Gastrocnemius medialis (tissue), 4 donors: ENCODE measurements at regions of chr9 and their contacts with region 1.

Region 1: DNA sequence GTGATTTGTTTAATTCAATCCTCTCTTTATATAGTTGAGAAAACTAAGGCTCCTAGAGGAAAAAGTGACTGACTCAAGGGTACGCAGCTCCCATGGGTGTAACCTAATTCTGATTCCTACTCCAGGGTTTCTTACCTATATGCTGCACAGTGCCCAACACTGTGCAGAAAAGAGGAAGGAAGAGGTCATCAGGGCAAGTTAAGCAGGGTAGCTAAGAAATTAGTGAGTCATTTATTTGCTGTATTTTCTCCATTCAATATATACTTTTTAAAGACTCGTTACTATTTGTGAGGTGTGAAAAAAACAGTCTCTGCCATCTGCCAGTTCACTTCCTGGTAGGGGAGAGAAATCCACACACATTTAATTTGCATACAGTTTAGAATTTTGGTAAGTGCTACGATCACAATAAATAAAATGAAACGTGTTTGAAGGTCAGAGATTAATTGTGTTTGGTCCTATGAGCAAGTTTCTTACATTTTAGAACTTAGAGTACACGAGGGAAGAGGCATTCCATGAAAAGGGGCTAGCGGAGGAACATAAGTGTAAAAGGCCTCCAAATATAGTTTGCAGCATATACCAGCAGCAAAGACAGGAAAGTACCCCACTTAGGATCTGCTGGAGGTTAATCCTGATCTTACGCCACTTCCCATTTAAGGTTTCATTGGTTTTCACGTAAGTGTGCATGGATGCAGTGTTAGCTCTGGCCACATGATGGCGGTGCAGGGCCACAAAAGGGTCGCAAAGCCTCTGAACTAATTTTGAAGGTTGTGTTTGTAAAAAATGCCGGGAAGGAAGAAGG is 59.9 kb upstream of the TLR4 start:
- DNase-seq: peak; percentile 14 to 50
- ATAC-seq: peak; percentile 65 to 66
- H3K4me3 ChIP-seq: peak overlapping the region; percentile 30 to 57 (median 38)
- H3K27ac ChIP-seq: peak overlapping the region in 1 of 4 donors; percentile 24
- H3K4me1 ChIP-seq: peaks cover 0 to 3% of the 10 kb centered on the region in 2 donors
- H3K27me3 ChIP-seq: peaks cover 0 to 17% (median 8%) of the 10 kb centered on the region in 3 donors
- CTCF ChIP-seq: peak; percentile 77 to 91 (median 86)
- POLR2A ChIP-seq: no peak

Region 2: DNA sequence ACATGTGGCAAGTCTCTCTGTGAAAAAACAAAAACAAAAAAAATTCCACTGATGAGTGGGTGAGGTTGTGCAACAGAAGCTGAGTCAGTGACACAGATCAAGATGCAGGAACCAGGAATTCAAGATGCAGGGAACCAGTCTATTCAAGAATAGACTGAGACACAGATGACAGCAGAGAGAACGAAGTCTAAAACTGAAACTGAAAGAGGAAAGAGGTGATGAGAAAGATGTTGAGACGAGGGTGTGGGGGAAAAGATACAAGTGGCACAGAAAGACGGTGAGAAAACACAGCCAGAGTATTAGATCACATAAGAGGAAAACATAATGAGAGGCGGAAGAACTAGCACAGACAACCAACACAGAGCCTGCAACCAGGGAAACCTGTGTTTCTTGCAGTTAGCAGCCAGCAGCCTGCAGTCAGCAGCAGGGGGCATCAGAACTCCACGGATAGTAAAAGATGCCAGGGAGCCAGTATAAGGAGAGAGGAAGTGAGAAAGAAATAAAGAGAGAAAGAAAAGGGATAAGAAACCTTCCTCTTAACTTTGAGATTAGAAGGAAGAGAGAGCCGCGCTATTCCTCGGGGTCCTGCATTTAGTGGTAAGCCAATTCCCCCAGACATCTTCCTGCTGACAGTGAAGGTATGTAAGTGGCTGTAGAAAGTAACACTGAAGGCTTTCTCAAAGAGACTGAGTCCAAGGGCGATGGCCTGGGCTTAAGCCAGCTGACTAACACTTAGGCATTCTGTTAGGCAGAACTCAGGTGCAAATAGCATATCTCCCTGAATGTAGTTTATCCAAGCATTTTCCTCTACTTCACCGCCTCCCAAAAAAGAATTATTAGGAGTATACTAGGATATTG is 138.8 kb after region 1 on chr9:
- in situ Hi-C with region 1: no loop called
- intact Hi-C with region 1: loop called (anchors 10 kb)
- DNase-seq: peak; percentile 26 to 46
- ATAC-seq: peak; percentile 71 to 75
- H3K4me3 ChIP-seq: peak overlapping the region; percentile 40 to 52 (median 50)
- H3K27ac ChIP-seq: peak overlapping the region; percentile 4 to 48 (median 45)
- H3K4me1 ChIP-seq: peaks cover 4 to 23% of the 10 kb centered on the region in 2 donors
- H3K27me3 ChIP-seq: no peaks in the 10 kb centered on the region
- CTCF ChIP-seq: peak; percentile 42 to 66 (median 59)
- POLR2A ChIP-seq: no peak